ENCODE measurements at regions of chr19 and their contacts with region 1.

Region 1: GRCh38 chr19:55146078-55146704 is 2.8 kb downstream of the TNNT1 start:
- DNase-seq: no peak
- H3K4me3 Mint-ChIP-seq: no peak overlapping the region
- H3K27ac Mint-ChIP-seq: no peak overlapping the region
- H3K4me1 Mint-ChIP-seq: peaks cover 6% of the 10 kb centered on the region
- H3K27me3 Mint-ChIP-seq: peaks cover 55% of the 10 kb centered on the region

Region 2: GRCh38 chr19:55005684-55006488 is 140.3 kb before region 1 on chr19:
- CTCF ChIA-PET with region 1: no interaction called
- intact Hi-C with region 1: no loop called
- DNase-seq: peak; percentile 66
- H3K4me3 Mint-ChIP-seq: peak overlapping the region; percentile 81
- H3K27ac Mint-ChIP-seq: peak overlapping the region; percentile 77
- H3K4me1 Mint-ChIP-seq: peaks cover 23% of the 10 kb centered on the region
- H3K27me3 Mint-ChIP-seq: peaks cover 18% of the 10 kb centered on the region

Region 3: GRCh38 chr19:55160128-55160985 is 14.2 kb after region 1 on chr19:
- CTCF ChIA-PET with region 1: interaction called, 24 read pairs
- intact Hi-C with region 1: loop called (anchors 2 kb)
- DNase-seq: peak; percentile 94
- H3K4me3 Mint-ChIP-seq: no peak overlapping the region
- H3K27ac Mint-ChIP-seq: no peak overlapping the region
- H3K4me1 Mint-ChIP-seq: peaks cover 9% of the 10 kb centered on the region
- H3K27me3 Mint-ChIP-seq: peaks cover 48% of the 10 kb centered on the region

Region 4: DNA sequence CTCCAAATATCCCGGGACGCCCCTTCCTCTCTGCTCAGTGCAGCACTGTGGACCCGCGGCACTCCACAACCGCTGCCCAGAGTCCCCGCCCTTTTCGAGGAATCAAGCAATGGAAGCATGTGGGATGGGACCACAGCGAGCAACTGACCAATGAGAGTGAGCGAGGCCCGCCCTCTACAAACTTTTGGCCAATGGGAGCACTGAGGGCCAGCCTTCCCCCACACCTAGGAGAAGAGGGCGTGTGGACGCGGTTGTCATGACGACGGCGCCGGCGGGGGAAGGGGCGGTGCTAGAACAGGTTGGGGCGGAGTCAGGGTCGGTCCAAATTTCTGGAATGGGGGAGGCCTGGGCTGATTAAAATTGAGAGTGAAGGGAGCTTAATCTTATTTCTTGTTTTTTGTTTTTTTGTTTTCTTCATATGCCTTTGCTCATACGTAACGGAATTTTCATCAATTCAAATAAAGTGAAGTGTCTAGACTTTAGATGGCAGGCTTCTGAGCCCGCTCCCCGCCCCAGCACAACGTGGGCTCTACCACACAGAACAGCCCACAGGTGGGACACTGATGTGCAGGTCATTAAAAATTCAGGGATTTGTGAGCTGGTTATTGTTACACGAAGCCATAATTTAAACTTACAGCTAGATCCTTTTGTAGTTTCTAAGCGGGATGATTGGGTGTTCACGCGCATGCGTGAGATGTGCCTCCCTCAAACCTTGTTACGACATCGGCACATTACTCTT is 20.5 kb after region 1 on chr19 and contains the start of gene DNAAF3:
- CTCF ChIA-PET with region 1: interaction called, 10 read pairs
- intact Hi-C with region 1: loop called (anchors 2 kb)
- DNase-seq: peak; percentile 83
- H3K4me3 Mint-ChIP-seq: peak within 1 kb of the TSS; percentile 64
- H3K27ac Mint-ChIP-seq: no peak within 1 kb of the TSS
- H3K4me1 Mint-ChIP-seq: peaks cover 11% of the 10 kb centered on the region
- H3K27me3 Mint-ChIP-seq: peaks cover 59% of the 10 kb centered on the region
- total RNA-seq, gene DNAAF3: not detected

Region 5: GRCh38 chr19:55227241-55228014 is 81.2 kb after region 1 on chr19:
- CTCF ChIA-PET with region 1: no interaction called
- intact Hi-C with region 1: no loop called
- DNase-seq: no peak
- H3K4me3 Mint-ChIP-seq: no peak overlapping the region
- H3K27ac Mint-ChIP-seq: peak overlapping the region; percentile 37
- H3K4me1 Mint-ChIP-seq: no peaks in the 10 kb centered on the region
- H3K27me3 Mint-ChIP-seq: no peaks in the 10 kb centered on the region

Region 6: GRCh38 chr19:55418185-55418584 is 272.0 kb after region 1 on chr19:
- CTCF ChIA-PET with region 1: interaction called, 13 read pairs
- intact Hi-C with region 1: loop called (anchors 1 kb)
- DNase-seq: peak; percentile 73
- H3K4me3 Mint-ChIP-seq: no peak overlapping the region
- H3K27ac Mint-ChIP-seq: no peak overlapping the region
- H3K4me1 Mint-ChIP-seq: peaks cover 13% of the 10 kb centered on the region
- H3K27me3 Mint-ChIP-seq: no peaks in the 10 kb centered on the region

Measured in activated naive CD4-positive, alpha-beta T cell treated with anti-CD3 and anti-CD28 coated beads for 36 hours (primary cell).